SK-N-SH (cell line): ENCODE measurements at regions of chr1 and their contacts with region 1.

Region 1: DNA sequence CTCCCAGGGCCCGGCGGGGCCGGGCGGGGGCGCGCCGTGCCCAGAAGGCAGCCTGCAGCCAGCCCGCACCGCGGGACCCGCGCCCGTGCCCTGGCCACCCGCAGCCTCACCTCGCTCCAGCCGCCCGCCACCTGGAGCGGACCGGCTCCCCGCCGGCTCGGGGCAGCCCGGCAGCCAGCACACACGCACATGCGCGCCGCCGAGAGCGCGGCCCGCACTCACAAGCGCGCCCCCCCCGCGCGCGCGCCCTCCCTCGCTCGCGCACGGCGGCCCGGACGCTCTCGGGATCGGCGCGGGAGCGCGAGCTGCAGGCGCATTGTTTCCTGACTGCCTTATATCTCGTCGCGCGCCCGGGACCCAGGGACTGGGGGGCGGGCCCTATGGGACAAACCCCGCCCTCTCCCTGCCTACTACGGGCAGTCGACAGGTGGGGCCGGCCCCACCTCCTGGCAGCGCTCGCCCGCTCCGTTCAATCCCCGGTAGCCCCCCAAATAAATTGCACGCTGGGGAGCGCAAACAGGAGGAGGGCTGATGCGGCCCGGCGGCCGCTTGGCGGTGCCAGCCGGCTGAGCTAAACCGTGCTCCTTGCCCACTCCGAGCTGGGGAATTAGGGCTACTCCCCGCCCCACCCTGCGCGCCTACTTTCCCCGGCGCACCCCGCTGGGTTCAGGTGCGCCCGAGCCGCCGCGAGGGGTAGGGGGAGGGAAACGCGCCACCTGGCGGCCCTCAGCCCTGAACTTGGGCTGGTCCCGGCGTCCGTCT is at the start of gene MYCL:
- DNase-seq: peak; percentile 93
- H3K4me3 ChIP-seq: peak within 1 kb of the TSS; percentile 71 to 81
- H3K27ac ChIP-seq: peak within 1 kb of the TSS in 1 of 2 experiments; percentile 18; a peak in 1 of 4 replicates
- H3K4me1 ChIP-seq: peaks cover 0 to 24% of the 10 kb centered on the region in 2 experiments; a peak in 1 of 4 replicates
- H3K27me3 ChIP-seq: peaks cover 24% of the 10 kb centered on the region; the same call in 1 of the 2 replicates
- CTCF ChIP-seq: peak; percentile 71
- EP300 ChIP-seq: no peak
- RAD21 ChIP-seq: peak; percentile 56
- polyA plus RNA-seq, gene MYCL: 0.48 and 0.57 TPM in 2 replicates

Region 2: GRCh38 chr1:39816415-39817090 is 85.3 kb before region 1 on chr1:
- CTCF ChIA-PET with region 1: interaction called, 126 read pairs
- POLR2A ChIA-PET with region 1: no interaction called
- DNase-seq: peak; percentile 86
- H3K4me3 ChIP-seq: no peak overlapping the region
- H3K27ac ChIP-seq: no peak overlapping the region
- H3K4me1 ChIP-seq: no peaks in the 10 kb centered on the region
- H3K27me3 ChIP-seq: peaks cover 5% of the 10 kb centered on the region; the same call in 1 of the 2 replicates
- CTCF ChIP-seq: peak; percentile 94
- EP300 ChIP-seq: no peak
- RAD21 ChIP-seq: peak; percentile 83

Region 3: DNA sequence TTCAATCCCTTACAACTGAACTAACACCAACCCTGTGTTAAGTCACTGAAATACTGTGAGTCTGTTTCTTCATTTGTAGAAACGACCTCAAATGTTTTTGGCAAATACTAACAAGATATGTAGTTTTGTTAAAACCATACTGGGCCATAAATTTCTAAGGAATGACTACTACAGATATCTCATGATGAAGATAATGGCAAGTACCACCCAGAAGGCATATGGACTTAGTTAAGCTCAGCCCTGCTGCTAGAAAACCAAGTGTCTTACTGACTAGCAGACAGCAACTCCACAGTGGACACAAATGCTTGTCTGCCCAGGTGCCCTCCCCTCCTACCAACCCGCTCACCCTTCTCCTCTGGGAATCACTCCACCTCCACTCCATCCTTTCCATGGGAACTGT is 68.8 kb before region 1 on chr1:
- CTCF ChIA-PET with region 1: interaction called, 19 read pairs
- POLR2A ChIA-PET with region 1: no interaction called
- DNase-seq: no peak
- H3K4me3 ChIP-seq: no peak overlapping the region
- H3K27ac ChIP-seq: no peak overlapping the region
- H3K4me1 ChIP-seq: peaks cover 5 to 8% of the 10 kb centered on the region in 2 experiments; a peak in 2 of 4 replicates
- H3K27me3 ChIP-seq: no peaks in the 10 kb centered on the region
- CTCF ChIP-seq: no peak
- EP300 ChIP-seq: no peak
- RAD21 ChIP-seq: no peak

Region 4: DNA sequence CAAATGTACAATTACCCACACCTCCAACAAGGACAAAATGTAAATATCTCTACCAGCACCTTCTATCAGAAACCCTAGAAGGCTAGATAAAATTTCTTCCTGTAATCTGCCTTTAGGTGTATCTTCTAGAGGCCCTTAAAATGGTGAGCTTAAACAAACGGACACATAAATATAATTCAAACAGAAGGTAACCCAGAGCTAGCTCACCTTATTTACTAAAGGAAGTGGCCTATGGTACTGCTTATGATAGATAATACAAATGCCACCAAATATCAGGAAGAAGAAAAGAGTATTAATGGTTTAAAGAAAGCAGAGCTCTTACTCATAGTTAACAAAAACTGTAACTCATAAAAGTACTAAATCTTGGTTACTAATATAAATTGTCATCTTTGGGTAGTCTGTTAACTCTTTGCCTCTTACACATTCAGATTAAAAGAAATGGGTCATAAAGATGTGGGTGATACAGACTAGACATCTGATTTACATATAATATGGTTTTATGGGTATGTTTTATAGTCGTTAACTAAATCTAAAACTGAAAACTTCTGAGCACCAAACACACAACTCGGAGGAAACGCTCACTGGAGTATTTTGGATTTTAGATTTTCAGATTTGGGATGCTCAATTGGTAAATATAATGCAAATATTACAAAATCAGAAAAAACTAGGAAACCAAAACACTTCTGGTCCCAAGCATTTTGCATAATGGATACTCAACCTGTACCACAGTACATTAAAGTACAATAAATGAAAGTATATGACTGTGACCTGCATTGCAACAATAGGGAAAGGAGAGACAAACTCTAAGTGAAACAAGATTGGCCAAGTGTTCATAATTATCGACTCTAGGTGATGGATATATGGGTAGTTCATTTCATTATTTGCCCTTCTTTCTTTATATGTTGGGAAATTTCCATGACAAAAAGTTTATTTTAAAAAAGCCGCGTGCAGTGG is 41.7 kb before region 1 on chr1:
- CTCF ChIA-PET with region 1: interaction called, 19 read pairs
- POLR2A ChIA-PET with region 1: no interaction called
- DNase-seq: no peak
- H3K4me3 ChIP-seq: no peak overlapping the region
- H3K27ac ChIP-seq: no peak overlapping the region
- H3K4me1 ChIP-seq: no peaks in the 10 kb centered on the region
- H3K27me3 ChIP-seq: no peaks in the 10 kb centered on the region
- CTCF ChIP-seq: no peak
- EP300 ChIP-seq: no peak
- RAD21 ChIP-seq: no peak

Region 5: GRCh38 chr1:39919545-39919944 is 17.7 kb after region 1 on chr1:
- CTCF ChIA-PET with region 1: interaction called, 21 read pairs
- POLR2A ChIA-PET with region 1: no interaction called
- DNase-seq: peak; percentile 88
- H3K4me3 ChIP-seq: no peak overlapping the region
- H3K27ac ChIP-seq: no peak overlapping the region
- H3K4me1 ChIP-seq: no peaks in the 10 kb centered on the region
- H3K27me3 ChIP-seq: no peaks in the 10 kb centered on the region; the same call in none of the 2 replicates
- CTCF ChIP-seq: peak; percentile 67
- EP300 ChIP-seq: no peak
- RAD21 ChIP-seq: peak; percentile 85

Region 6: DNA sequence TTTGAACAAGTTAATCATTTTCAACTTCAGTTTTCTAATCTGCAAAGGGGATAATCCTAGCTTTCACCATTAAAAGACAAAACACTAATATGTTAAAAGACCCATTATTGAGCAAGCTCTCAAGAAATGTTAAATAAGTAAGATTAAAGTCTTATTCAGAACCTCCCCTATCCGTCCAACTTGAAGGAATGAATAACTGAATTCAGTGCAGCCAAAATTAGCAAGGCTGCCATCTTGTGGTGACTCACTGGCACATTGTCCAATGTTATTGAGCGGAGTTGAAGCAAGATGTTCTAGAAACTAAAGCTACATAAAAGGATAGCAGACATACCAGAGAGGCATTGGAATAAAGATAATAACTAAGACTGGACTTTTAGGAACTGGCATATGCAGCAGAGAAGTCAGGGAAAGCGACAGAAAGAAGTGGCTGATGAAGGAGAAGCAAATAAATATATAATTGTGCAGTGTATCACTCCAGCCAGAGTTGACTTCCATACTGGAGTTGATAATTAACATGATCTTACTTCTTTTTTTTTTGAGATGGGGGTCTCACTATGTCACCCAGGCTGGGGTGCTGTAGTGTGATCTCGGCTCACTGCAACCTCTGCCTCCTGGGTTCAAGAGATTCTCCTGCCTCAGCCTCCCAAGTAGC is 130.5 kb after region 1 on chr1:
- CTCF ChIA-PET with region 1: interaction called, 11 read pairs
- POLR2A ChIA-PET with region 1: no interaction called
- DNase-seq: peak; percentile 54
- H3K4me3 ChIP-seq: no peak overlapping the region
- H3K27ac ChIP-seq: no peak overlapping the region
- H3K4me1 ChIP-seq: peaks cover 15 to 17% of the 10 kb centered on the region in 2 experiments
- H3K27me3 ChIP-seq: no peaks in the 10 kb centered on the region
- CTCF ChIP-seq: peak; percentile 77
- EP300 ChIP-seq: no peak
- RAD21 ChIP-seq: peak; percentile 72

Region 7: DNA sequence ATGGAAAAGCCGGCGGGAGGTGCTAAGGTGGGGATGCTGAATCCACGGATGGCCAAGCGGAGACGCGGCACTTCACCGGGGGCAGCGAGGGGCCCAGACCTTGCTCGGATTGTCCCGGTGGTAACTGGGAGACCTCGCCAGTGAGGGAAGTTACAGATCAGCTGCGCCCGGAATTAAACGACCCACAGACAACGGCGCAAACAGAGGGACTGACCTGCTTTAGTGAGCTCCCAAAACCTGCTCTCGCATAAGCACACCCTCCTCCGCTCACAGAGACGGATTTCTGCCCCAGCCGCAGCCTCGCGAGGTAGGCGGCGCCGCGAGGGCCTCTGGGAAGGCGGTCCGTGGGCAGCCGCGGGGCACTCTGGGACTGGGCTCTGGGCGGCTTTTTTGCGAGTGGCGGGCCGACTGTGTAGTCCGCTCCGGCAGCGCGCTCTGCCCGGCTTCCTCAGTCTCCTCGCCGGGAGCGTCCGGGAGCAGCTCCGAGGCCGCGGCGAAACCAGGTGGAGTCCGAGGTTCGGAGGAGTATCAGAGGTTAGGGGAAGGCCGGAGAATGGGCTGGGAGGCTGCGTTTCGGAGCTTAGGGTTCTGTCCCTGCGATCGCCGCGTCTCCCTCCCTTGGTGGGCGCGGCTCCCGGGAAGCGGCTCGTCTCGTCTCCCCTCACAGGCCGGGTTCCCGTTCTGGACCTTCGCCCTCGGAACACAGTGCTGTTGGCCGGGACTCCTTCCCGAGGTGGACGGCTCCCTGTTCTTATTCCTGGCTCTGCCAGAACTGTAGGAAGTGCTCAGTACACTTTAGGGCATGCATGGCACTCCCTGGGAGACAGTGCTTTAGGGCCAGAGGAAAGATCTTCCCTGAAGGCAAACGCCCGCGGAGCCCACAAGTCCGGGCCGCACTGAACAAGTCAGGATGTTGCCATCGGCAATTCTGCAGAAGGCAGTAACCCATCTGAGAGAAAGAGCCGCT is 606.8 kb after region 1 on chr1 and contains the start of gene EXO5:
- CTCF ChIA-PET with region 1: no interaction called
- POLR2A ChIA-PET with region 1: no interaction called
- DNase-seq: peak; percentile 88
- H3K4me3 ChIP-seq: peak within 1 kb of the TSS; percentile 60 to 68
- H3K27ac ChIP-seq: peak within 1 kb of the TSS; percentile 47 to 84; a peak in 3 of 4 replicates
- H3K4me1 ChIP-seq: peaks cover 0 to 5% of the 10 kb centered on the region in 2 experiments; a peak in 1 of 4 replicates
- H3K27me3 ChIP-seq: no peaks in the 10 kb centered on the region
- CTCF ChIP-seq: no peak
- EP300 ChIP-seq: no peak
- RAD21 ChIP-seq: no peak
- polyA plus RNA-seq, gene EXO5: 7.4 and 8.8 TPM in 2 replicates